GM10248 (cell line): ENCODE measurements at regions of chr13 and their contacts with region 1.

Region 1: DNA sequence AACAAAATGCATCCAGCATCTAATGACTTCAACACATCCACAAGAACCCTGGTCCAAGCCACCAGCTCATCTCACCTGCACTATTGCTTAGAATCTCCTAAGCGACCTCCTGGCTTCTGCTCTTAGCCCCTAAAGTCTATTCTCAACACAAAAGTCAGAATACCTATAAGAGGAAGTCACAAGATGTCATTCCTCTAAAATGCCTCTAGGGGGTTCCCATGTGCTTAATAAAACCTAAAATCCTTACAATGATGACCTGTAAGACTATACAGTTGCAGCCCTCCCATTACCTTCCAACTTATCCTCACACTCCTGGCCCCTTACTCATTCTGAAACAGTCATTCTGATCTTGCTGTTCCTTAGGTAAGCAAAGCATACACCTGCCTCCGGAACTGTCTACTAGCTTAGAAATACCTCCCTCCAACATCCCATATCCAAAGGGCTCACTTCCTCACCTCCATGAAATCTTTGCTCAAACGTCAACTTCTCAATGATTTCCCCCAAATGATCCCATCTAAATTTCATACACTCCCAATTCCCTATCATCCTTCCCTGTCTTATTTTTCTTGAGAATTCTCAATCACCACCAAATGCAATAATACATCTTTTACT is 10.0 kb downstream of the ATP7B start:
- DNase-seq: peak; percentile 76
- CTCF ChIP-seq: peak; percentile 47

Region 2: DNA sequence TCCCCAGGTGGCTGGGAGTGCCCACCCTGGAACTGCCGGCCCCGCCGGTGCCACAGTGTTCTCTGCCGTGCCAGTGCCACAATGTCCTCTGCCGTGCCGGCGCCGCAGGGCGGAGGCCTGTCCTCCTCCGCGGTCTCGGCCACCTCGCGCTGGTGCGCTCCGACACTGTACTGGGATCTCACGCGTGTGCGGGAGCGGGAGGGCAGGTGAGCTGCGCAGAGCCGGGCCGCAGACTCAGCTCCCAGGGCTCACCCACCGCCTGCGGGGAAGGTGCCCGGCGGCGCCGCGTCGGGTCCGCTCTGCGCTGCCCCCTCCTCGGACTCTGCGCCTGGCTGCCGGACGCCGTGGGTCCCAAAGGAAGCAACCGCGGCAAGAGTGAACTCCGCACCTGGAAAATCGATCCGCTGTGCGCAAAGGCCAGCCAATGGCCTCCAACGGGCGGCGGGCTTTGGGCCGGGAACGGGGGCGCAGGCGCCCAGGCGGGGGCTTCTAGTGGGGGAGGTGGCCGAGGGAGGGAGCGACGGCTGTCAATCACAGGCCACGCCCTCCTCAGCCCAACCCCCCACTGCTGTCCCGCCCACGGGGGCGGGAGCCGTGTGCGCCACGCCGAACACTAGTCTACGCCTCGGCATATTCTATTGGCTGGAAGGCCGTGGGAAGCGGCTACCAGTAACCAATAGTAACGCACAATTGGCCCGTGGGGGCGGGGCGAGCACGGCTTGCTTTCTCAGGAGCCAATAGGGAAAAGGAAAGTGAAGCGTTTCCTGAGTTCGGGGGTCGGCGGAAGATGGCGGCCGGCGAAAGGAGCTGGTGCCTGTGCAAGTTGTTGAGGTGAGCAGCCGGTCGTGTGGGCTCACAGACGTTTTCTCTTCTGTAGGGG is 10.6 kb after region 1 on chr13 and contains the start of gene ALG11:
- CTCF ChIA-PET with region 1: interaction called, 16 read pairs
- POLR2A ChIA-PET with region 1: no interaction called
- DNase-seq: peak; percentile 98
- CTCF ChIP-seq: no peak